Mammary epithelial cell (primary cell): ENCODE measurements at regions of chr1 and their contacts with region 1.

Region 1: DNA sequence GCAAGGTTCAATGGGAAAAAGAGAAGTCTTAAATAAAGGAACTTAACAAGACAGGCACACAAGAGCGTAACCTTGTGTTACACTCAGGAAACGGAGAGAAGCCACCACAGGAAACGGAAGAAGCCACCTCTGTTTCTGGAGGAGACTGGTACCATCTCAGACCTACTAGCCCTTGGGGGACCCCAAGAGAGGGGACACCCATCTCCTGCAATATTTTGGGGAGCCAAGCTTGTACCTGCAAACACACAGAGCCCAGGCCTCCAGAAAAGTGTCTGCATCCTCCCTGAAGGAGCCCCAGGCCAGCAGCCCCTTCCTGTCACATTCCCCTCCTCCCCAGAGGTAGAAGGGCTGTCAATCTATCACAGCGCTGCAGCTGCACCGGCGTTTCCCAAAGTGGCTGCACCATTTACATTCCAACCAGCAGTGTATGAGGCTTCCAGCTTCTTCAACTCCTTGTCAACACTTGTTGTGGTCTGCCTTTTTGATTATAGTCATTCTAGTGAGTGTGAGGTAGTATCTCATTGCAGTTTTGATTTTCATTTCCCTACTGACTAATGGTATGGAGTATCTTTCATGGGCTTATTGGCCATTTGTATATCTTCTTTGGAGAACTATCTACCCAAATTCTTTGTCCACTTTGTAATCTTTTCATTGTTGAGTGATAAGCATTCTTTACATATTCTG is 23.0 kb upstream of the PADI1 start:
- DNase-seq: no peak
- H3K4me3 ChIP-seq: no peak overlapping the region
- H3K27ac ChIP-seq: no peak overlapping the region
- H3K4me1 ChIP-seq: peaks cover 15% of the 10 kb centered on the region
- H3K27me3 ChIP-seq: no peaks in the 10 kb centered on the region
- CTCF ChIP-seq: no peak

Region 2: GRCh38 chr1:16938351-16939321 is 243.3 kb before region 1 on chr1:
- CTCF ChIA-PET with region 1: no interaction called
- dilution Hi-C with region 1: no loop called
- in situ Hi-C with region 1: no loop called
- intact Hi-C with region 1: no loop called
- DNase-seq: no peak
- H3K4me3 ChIP-seq: no peak overlapping the region
- H3K27ac ChIP-seq: no peak overlapping the region
- H3K4me1 ChIP-seq: no peaks in the 10 kb centered on the region
- H3K27me3 ChIP-seq: no peaks in the 10 kb centered on the region
- CTCF ChIP-seq: no peak

Region 3: DNA sequence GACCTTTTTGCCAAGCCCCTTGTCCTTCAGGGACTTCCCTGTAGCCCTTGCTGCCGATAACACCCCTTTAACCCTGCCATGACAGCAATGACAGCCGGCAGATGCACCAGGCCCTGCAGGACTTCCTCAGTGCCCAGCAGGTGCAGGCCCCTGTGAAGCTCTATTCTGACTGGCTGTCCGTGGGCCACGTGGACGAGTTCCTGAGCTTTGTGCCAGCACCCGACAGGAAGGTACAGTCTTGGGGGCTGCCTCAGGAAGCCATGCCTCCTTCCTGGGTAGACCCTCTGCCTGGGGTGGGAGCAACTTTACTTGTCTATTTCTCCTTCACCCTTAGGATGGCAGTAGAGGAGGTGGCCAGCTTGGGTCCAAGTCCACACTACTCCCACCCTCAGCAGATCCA is 174.0 kb after region 1 on chr1:
- CTCF ChIA-PET with region 1: no interaction called
- dilution Hi-C with region 1: loop called (anchors 10 kb)
- in situ Hi-C with region 1: no loop called
- intact Hi-C with region 1: no loop called
- DNase-seq: no peak
- H3K4me3 ChIP-seq: no peak overlapping the region
- H3K27ac ChIP-seq: no peak overlapping the region
- H3K4me1 ChIP-seq: no peaks in the 10 kb centered on the region
- H3K27me3 ChIP-seq: no peaks in the 10 kb centered on the region
- CTCF ChIP-seq: no peak